Psoas muscle (tissue), 8 donors: ENCODE measurements at regions of chr14 and their contacts with region 1.

Region 1: GRCh38 chr14:23120541-23121251 is 1.6 kb upstream of the CEBPE start:
- DNase-seq: peak; percentile 88 to 94
- ATAC-seq: peak; percentile 74 to 94 (median 82)
- H3K4me3 ChIP-seq: no peak overlapping the region
- H3K27ac ChIP-seq: no peak overlapping the region
- H3K4me1 ChIP-seq: peaks cover 21% of the 10 kb centered on the region
- H3K27me3 ChIP-seq: no peaks in the 10 kb centered on the region
- CTCF ChIP-seq: peak; percentile 100

Region 2: GRCh38 chr14:23186913-23187654 is 66.4 kb after region 1 on chr14:
- intact Hi-C with region 1: loop called (anchors 1 to 2 kb)
- DNase-seq: no peak
- ATAC-seq: peak; percentile 68 to 73 (median 70)
- H3K4me3 ChIP-seq: no peak overlapping the region
- H3K27ac ChIP-seq: no peak overlapping the region
- H3K4me1 ChIP-seq: peaks cover 4% of the 10 kb centered on the region
- H3K27me3 ChIP-seq: no peaks in the 10 kb centered on the region
- CTCF ChIP-seq: peak; percentile 79

Region 3: DNA sequence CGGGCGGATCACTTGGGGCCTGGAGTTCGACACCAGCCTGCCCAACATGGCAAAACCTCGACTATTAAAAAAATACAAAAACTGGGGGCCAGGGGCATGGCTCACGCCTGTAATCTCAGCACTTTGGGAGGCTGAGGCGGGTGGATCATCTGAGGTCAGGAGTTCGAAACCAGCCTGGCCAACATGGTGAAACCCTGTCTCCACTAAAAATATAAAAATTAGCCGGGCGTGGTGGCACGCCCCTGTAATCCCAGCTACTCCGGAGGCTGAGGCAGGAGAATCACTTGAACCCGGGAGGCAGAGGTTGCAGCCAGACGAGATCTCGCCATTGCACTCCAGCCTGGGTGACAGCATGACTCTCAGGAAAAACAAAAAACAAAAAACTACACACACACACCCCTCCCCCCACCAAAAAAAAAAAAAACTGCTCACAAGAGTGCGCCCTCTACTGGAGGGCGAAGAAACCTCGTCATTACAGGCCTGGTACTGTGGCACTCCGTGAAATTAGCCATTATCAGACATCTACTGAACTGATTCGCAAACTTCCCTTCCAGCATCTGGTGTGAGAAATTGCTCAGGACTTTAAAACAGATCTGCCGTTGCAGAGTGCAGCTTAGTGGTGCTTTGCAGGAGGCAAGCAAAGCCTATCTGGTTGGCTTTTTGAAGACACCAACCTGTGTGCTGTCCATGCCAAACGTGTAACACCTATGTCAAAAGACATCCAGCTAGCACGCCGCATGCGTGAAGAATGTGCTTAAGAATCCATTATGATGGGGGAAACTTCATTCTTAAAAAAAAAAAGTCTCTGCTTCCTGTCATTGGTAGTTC is 174.3 kb after region 1 on chr14:
- intact Hi-C with region 1: loop called in 1 of 2 experiments (anchors 10 kb)
- DNase-seq: peak; percentile 32 to 58
- ATAC-seq: peak; percentile 71 to 86 (median 77)
- H3K4me3 ChIP-seq: peak overlapping the region; percentile 38
- H3K27ac ChIP-seq: no peak overlapping the region
- H3K4me1 ChIP-seq: peaks cover 24% of the 10 kb centered on the region
- H3K27me3 ChIP-seq: no peaks in the 10 kb centered on the region
- CTCF ChIP-seq: peak; percentile 79